ENCODE measurements at regions of chr12 and their contacts with region 1.

Region 1: GRCh38 chr12:50132505-50133135 is 20.6 kb downstream of the COX14 start:
- DNase-seq: no peak
- ATAC-seq: no peak
- H3K4me3 Mint-ChIP-seq: no peak overlapping the region
- H3K27ac Mint-ChIP-seq: no peak overlapping the region
- H3K4me1 Mint-ChIP-seq: peaks cover 5% of the 10 kb centered on the region
- H3K27me3 Mint-ChIP-seq: no peaks in the 10 kb centered on the region

Region 2: DNA sequence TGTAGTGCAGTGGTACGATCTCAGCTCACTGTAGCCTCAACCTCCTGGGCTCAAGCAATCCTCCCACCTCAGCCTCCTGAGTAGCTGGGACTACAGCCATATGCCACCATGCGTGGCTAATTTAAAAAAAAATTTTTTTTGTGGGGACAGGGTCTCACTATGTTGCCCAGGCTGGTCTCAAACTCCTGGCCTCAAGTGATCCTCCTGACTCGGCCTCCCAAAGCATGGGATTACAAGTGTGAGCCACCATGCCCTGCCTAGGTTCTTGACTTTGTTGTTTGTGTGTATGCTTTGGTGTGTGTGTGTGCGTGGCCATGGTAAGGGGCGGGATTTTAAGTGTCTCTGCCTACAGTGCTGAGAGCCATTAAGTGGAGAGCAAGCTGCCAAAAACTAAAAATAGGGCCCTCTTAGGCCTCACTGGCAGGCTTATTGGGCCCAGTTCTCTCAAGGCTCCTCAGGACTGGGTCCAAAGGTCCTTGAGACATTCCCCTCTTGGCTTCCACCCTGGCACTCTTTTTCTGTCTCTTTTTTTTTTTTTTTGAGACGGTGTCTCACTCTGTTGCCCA is 15.5 kb before region 1 on chr12:
- CTCF ChIA-PET with region 1: interaction called, 114 read pairs
- POLR2A ChIA-PET with region 1: interaction called, 5 read pairs
- DNase-seq: no peak
- ATAC-seq: no peak
- H3K4me3 Mint-ChIP-seq: no peak overlapping the region
- H3K27ac Mint-ChIP-seq: no peak overlapping the region
- H3K4me1 Mint-ChIP-seq: peaks cover 26% of the 10 kb centered on the region
- H3K27me3 Mint-ChIP-seq: no peaks in the 10 kb centered on the region

Region 3: DNA sequence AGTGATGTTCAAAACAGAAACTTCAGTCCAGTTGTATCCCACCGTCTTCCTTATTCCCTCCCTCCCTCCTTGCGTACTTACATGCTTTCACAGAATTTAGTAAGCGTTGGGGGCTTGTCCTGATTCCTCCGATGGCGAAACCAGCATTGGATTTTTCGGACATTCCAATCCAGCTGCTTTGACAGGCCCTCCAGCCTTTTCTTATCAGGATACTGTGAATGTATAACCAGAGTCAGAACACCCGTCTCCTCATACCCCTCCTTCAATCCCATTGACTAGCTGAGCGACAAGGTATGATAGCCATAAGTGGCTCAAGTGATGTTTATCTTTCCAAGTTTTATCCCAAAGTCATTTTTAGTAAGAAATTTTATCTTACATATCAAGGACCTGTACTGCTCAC is 10.4 kb after region 1 on chr12:
- CTCF ChIA-PET with region 1: interaction called, 10 read pairs
- POLR2A ChIA-PET with region 1: no interaction called
- DNase-seq: no peak
- ATAC-seq: no peak
- H3K4me3 Mint-ChIP-seq: no peak overlapping the region
- H3K27ac Mint-ChIP-seq: no peak overlapping the region
- H3K4me1 Mint-ChIP-seq: no peaks in the 10 kb centered on the region
- H3K27me3 Mint-ChIP-seq: no peaks in the 10 kb centered on the region

Region 4: GRCh38 chr12:50174971-50175715 is 42.5 kb after region 1 on chr12:
- CTCF ChIA-PET with region 1: interaction called, 33 read pairs
- POLR2A ChIA-PET with region 1: no interaction called
- DNase-seq: peak; percentile 39
- ATAC-seq: no peak
- H3K4me3 Mint-ChIP-seq: no peak overlapping the region
- H3K27ac Mint-ChIP-seq: no peak overlapping the region
- H3K4me1 Mint-ChIP-seq: peaks cover 2% of the 10 kb centered on the region
- H3K27me3 Mint-ChIP-seq: no peaks in the 10 kb centered on the region

Region 5: DNA sequence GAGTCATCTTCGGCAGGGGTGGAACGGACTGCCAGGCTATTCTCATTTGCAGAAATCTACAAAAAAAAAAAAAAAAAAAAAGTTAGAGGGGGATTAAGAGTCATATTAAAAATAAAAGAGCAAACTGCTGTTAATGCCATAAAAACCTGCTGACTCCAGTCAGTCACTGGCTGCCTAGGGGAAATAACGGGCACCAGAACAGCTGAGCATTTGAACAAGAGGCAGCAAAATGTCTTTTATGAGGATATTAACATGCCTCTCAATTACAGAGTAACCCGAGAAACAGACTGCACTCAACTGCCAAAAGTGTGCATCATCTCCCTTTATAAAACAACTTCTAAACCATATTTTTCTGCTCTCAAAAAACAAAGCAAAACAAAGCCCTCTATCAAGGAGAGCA is 63.2 kb after region 1 on chr12:
- CTCF ChIA-PET with region 1: no interaction called
- POLR2A ChIA-PET with region 1: no interaction called
- DNase-seq: no peak
- ATAC-seq: no peak
- H3K4me3 Mint-ChIP-seq: no peak overlapping the region
- H3K27ac Mint-ChIP-seq: no peak overlapping the region
- H3K4me1 Mint-ChIP-seq: peaks cover 3% of the 10 kb centered on the region
- H3K27me3 Mint-ChIP-seq: no peaks in the 10 kb centered on the region

Region 6: DNA sequence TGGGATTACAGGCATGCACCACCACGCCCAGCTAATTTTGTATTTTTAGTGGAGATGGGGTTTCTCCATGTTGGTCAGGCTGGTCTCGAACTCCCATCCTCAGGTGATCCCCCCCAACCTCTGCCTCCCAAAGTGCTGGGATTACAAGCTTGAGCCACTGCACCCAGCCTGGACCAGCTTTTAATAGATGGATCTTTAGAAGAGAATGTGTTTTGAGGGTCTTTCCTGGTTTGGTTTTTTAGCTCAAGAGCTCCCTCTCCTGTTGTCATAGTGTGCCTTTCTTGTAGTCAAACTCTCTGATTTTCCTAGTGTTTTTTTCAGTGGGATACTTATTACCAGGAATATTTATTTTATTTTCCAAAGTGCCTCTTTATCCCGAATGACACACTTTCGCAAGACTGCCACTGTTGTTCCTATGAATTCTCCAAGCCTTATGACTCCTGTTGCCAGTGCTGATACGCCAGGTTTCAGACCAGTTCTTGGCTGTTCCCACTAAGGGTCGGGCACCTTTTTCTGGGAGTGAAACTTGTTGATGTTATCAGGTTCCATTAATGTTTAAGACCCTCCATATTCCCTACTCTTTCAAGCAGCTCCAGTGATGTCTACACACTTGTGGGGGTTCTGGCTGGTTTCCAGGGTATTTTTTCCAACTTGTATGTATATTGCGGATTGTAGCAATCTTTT is 182.2 kb after region 1 on chr12:
- CTCF ChIA-PET with region 1: interaction called, 12 read pairs
- POLR2A ChIA-PET with region 1: no interaction called
- DNase-seq: no peak
- ATAC-seq: no peak
- H3K4me3 Mint-ChIP-seq: no peak overlapping the region
- H3K27ac Mint-ChIP-seq: no peak overlapping the region
- H3K4me1 Mint-ChIP-seq: no peaks in the 10 kb centered on the region
- H3K27me3 Mint-ChIP-seq: no peaks in the 10 kb centered on the region

Measured in activated CD8-positive, alpha-beta T cell treated with anti-CD3 and anti-CD28 coated beads, Interleukin-2, amount 10 ng/mL, durations not matched to agents 7 days and 5 days (primary cell).